ENCODE measurements at regions of chr11 and their contacts with region 1.

Region 1: GRCh38 chr11:59171508-59172322 is at the start of gene DTX4:
- DNase-seq: peak; percentile 75 to 80
- ATAC-seq: peak; percentile 91
- H3K4me3 ChIP-seq: peak within 1 kb of the TSS; percentile 52 to 89 (median 62)
- H3K27ac ChIP-seq: peak within 1 kb of the TSS in 3 of 4 donors; percentile 18 to 34 (median 27)
- H3K4me1 ChIP-seq: peaks cover 0 to 8% of the 10 kb centered on the region in 2 donors
- H3K27me3 ChIP-seq: peaks cover 4 to 14% (median 14%) of the 10 kb centered on the region in 3 donors
- CTCF ChIP-seq: peak; percentile 64 to 88 (median 86)
- POLR2A ChIP-seq: no peak
- total RNA-seq, gene DTX4: 0.15 to 0.91 (median 0.47) TPM

Region 2: GRCh38 chr11:58654079-58654907 is 517.4 kb before region 1 on chr11:
- in situ Hi-C with region 1: loop called in 1 of 4 experiments (anchors 25 kb)
- intact Hi-C with region 1: no loop called
- DNase-seq: peak; percentile 12 to 56
- ATAC-seq: peak; percentile 61 to 63
- H3K4me3 ChIP-seq: no peak overlapping the region
- H3K27ac ChIP-seq: no peak overlapping the region
- H3K4me1 ChIP-seq: no peaks in the 10 kb centered on the region
- H3K27me3 ChIP-seq: no peaks in the 10 kb centered on the region
- CTCF ChIP-seq: peak; percentile 52 to 82 (median 65)
- POLR2A ChIP-seq: no peak

Region 3: GRCh38 chr11:59207988-59208451 is 36.3 kb after region 1 on chr11:
- in situ Hi-C with region 1: loop called in 1 of 4 experiments (anchors 5 kb)
- intact Hi-C with region 1: loop called (anchors 1 kb)
- DNase-seq: no peak
- ATAC-seq: no peak
- H3K4me3 ChIP-seq: no peak overlapping the region
- H3K27ac ChIP-seq: no peak overlapping the region
- H3K4me1 ChIP-seq: no peaks in the 10 kb centered on the region
- H3K27me3 ChIP-seq: no peaks in the 10 kb centered on the region
- CTCF ChIP-seq: peak; percentile 36 to 64 (median 60)
- POLR2A ChIP-seq: no peak

Region 4: GRCh38 chr11:59273373-59273841 is 101.7 kb after region 1 on chr11:
- in situ Hi-C with region 1: no loop called
- intact Hi-C with region 1: no loop called
- DNase-seq: no peak
- ATAC-seq: no peak
- H3K4me3 ChIP-seq: no peak overlapping the region
- H3K27ac ChIP-seq: no peak overlapping the region
- H3K4me1 ChIP-seq: no peaks in the 10 kb centered on the region
- H3K27me3 ChIP-seq: no peaks in the 10 kb centered on the region
- CTCF ChIP-seq: no peak
- POLR2A ChIP-seq: no peak

Region 5: DNA sequence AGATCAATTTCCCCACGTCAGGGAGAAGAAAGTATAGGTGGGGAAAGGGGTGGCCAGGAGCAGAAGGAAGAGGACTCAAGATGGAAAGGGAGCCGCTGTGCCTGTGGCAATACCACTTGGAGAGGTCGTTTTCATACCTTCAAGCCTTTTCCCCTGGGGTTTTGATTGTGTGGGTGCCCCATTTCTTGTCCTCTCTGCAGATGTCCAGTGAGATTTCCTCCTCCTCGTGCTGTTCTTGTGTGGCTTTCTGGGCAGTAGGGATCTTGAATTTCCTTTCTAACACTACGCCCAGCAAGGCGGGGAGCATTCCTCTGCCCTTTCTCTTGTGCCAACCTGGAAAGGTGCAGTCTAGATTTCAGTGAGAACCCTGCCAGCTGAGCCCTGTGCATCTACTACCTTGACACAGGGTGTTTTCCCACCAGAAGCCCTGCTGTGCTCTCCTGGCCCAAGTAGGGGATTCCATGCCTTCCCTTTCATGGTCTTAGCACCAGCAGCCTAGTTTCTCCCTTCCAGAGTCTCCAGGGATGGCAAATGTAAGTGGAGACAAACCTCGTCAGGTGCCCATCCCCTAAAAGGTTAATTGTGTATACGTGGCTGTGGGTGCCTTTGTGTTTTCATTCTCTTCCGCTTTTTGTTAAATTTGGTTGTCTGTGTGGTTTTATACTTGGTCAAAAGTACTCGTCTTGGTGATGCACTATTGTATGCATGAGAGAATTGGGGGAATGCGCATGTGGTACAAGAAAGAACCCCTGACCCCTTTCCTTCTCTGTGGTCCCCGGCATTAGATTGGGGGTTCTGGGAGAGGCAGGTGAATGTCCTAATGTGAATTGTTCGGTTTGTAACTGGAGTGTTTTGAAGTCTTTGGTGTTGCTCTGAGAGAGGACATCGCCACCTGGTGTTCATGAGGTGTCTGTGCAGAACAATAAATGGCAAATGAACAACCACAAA is 112.4 kb after region 1 on chr11:
- in situ Hi-C with region 1: loop called in 1 of 4 experiments (anchors 10 kb)
- intact Hi-C with region 1: loop called (anchors 2 kb)
- DNase-seq: no peak
- ATAC-seq: no peak
- H3K4me3 ChIP-seq: no peak overlapping the region
- H3K27ac ChIP-seq: no peak overlapping the region
- H3K4me1 ChIP-seq: no peaks in the 10 kb centered on the region
- H3K27me3 ChIP-seq: no peaks in the 10 kb centered on the region
- CTCF ChIP-seq: peak; percentile 36 to 72 (median 61)
- POLR2A ChIP-seq: no peak

Region 6: DNA sequence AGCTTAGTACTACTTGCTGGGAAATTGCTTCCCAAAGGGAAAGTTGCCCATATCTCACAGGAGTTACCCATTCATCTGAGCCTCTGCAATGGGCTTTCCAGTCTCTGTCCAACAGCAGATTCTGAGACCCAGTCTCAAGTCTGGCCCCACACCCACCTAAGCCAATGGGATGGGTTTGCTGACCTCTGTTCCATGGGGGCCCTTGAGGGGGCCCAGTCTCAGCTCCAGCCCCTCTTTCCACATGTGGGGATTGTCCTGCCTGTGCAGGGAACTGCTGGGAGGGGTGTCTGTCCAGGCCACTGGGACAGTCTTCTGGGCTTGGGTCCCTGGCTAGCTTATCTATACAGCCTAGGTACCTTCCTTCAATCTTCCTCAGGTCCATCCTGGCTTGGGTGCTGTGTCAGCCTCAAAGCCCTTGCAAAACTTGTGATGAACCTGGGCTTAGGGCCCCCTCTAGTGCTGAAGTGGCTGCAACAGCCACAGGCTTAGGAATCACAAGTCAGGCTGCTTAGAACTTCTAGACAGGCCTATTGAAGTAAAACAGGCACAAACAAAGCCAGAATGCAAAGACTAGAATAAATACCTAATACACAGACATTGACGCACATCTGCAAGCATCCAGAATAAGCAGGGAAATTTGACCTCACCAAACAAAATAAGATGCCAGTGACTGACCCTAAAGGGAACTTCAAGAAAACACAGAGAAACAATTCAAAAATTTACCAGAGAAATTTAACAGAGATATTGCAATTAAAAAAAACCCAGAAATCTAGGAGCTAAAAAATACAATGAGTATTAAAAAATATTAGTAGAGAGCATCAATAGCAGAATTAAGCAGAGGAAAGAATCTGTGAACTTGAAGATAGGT is 508.8 kb after region 1 on chr11:
- in situ Hi-C with region 1: no loop called
- intact Hi-C with region 1: loop called (anchors 10 kb)
- DNase-seq: peak; percentile 44 to 60
- ATAC-seq: peak; percentile 96 to 98
- H3K4me3 ChIP-seq: no peak overlapping the region
- H3K27ac ChIP-seq: no peak overlapping the region
- H3K4me1 ChIP-seq: no peaks in the 10 kb centered on the region
- H3K27me3 ChIP-seq: peaks cover 0 to 7% (median 0%) of the 10 kb centered on the region in 3 donors
- CTCF ChIP-seq: peak; percentile 40 to 71 (median 63)
- POLR2A ChIP-seq: no peak

Measured in gastrocnemius medialis (tissue), 4 donors.